ENCODE measurements at regions of chrX and their contacts with region 1.

Region 1: GRCh38 chrX:123422877-123423276 is 238.8 kb downstream of the GRIA3 start:
- DNase-seq: no peak
- ATAC-seq: no peak

Region 2: DNA sequence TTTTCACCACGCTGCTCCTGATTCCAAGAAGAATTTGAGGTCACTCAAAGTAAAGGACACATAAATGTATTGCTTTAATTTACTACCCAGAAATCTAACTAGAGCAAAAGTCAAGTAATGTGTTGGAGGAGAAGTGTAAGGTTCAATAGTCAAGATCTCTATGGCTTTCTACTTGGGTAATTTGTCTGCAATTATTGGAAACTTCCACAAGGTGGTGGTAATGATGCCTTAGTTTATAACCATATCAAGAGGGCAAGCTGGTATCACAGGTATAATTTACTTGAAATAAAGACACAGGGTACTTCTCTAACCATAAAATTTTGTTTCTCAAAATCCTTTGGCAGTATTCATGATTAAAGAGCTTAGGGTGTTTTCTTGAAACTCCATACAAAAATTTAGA is 249.0 kb before region 1 on chrX:
- intact Hi-C with region 1: loop called (anchors 10 kb)
- DNase-seq: no peak
- ATAC-seq: no peak

Region 3: DNA sequence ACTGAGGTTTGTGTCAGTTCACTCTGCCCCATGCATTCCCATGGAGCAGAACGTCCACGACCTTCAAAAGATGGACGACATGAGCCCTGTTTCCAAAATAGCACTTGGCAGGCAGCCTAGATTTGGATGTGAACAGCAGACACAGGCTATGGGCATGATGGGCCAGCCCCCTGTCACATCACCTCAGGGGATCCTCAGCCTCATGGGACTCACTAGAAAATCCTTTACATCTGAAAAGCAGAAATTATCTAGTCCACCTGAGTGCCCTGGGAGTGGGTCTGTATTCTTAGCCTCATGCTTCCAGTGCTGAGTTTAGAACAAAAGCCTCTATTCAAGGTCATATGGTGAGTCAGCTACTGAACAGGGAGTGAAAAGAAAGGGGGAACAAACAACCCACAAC is 203.0 kb before region 1 on chrX:
- intact Hi-C with region 1: no loop called
- DNase-seq: peak; percentile 36
- ATAC-seq: peak; percentile 87

Measured in Right ventricle myocardium superior (tissue), 1 donor.